CD8-positive, alpha-beta memory T cell (primary cell): ENCODE measurements at regions of chr11 and their contacts with region 1.

Region 1: DNA sequence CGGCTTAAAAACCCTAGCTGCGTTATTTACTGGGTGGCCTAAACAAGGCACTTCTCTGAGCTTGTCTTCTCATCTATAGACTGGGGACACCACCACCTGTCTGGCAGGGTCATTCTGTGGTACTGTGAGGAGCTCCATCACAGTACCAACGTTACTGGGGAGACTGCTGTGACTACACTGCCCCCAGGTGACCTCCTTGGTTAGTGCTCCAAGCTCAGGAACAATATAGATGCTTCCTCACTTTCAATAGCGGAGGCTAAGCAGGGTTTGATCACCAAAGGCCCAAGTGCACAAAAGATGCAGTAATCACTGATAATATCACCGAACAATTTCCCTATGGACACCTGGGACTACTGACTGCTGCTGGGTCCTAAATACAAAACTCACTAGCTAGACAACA is 18.8 kb downstream of the PRPF19 start:
- DNase-seq: peak in 1 of 5 donors; percentile 38
- H3K4me3 ChIP-seq: no peak overlapping the region
- H3K4me3 Mint-ChIP-seq: no peak overlapping the region
- H3K27ac ChIP-seq: no peak overlapping the region
- H3K27ac Mint-ChIP-seq: peak overlapping the region in 5 of 8 donors; percentile 7 to 74 (median 48)
- H3K4me1 ChIP-seq: no peaks in the 10 kb centered on the region
- H3K4me1 Mint-ChIP-seq: peaks cover 6 to 8% (median 8%) of the 10 kb centered on the region in 3 donors
- H3K27me3 ChIP-seq: no peaks in the 10 kb centered on the region
- H3K27me3 Mint-ChIP-seq: no peaks in the 10 kb centered on the region

Region 2: DNA sequence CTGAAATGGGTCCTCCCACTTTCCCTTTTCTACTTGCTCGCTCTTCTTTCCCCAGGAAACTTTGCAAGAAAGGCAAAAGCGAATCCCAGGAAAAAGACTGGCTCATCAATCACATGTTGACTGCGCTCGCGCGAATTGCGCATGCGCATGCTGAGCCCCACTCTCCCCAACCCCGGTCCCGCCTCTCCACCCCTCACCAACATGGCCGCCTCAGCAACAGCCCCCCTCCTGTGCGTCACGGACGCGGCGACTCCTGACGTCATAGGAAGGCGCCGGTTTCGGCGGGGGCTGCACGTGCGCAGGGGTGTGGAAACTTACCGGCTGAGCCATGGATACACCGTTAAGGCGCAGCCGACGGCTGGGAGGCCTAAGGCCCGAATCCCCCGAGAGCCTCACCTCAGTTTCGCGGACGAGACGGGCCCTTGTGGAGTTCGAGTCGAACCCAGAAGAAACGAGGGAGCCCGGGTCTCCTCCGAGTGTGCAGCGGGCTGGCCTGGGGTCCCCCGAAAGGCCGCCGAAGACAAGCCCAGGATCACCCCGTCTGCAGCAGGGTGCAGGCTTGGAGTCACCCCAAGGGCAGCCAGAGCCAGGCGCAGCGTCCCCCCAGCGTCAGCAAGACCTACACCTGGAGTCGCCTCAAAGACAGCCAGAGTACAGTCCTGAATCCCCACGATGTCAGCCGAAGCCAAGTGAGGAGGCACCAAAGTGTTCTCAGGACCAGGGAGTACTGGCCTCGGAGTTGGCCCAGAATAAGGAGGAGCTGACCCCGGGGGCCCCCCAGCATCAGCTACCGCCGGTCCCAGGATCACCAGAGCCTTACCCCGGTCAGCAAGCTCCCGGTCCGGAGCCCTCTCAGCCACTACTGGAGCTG is 45.5 kb before region 1 on chr11 and contains the start of gene CCDC86:
- CTCF ChIA-PET with region 1: interaction called, 19 read pairs
- POLR2A ChIA-PET with region 1: no interaction called
- DNase-seq: peak; percentile 96 to 99 (median 98)
- H3K4me3 ChIP-seq: peak within 1 kb of the TSS; percentile 95
- H3K4me3 Mint-ChIP-seq: peak within 1 kb of the TSS; percentile 80 to 95 (median 89)
- H3K27ac ChIP-seq: peak within 1 kb of the TSS; percentile 83
- H3K27ac Mint-ChIP-seq: peak within 1 kb of the TSS; percentile 92 to 98 (median 96)
- H3K4me1 ChIP-seq: peaks cover 37% of the 10 kb centered on the region
- H3K4me1 Mint-ChIP-seq: peaks cover 45 to 55% (median 54%) of the 10 kb centered on the region in 3 donors
- H3K27me3 ChIP-seq: no peaks in the 10 kb centered on the region
- H3K27me3 Mint-ChIP-seq: peaks cover 0 to 3% of the 10 kb centered on the region in 2 donors
- total RNA-seq, gene CCDC86: 122 to 124 TPM

Region 3: DNA sequence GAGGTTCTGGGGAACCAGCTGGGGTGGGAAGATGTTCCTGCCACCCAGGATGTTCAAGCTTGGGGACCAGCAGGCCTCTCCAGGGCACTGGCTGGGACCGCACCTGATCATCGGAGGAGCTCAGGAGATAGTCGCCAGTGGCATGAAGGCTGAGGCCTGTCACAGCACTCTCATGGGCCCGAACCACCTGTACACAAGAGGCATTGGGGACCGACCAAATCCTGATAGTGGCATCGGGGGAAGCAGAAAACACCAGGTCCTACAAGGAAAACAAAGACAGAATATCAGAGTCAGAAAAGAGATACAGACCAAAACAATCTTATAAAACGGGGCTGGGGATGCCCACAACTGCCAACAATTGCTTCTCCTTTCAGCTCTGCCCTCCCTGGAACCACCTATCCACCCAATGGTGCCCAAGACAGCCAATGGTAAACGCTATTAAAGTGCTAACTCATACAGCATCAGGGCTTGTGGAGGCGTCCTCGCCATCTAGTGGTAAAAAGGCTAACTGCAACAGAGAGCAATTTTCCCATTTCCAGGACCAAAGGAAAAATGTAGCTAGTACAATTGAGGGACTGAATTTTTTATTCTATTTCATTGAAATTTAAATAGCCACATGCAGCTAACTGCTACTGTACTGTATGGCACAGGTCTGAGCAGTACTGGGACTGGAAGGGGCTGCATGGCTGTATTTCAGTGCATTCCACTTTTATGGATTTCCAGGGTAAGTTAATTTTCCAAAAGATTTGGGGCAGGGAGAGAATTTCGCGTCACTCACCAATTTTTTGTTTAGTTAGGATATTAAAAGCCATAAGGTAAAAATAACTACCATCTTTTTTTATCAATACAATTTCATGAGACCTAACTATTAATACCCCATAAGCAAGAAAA is 11.7 kb after region 1 on chr11:
- CTCF ChIA-PET with region 1: interaction called, 32 read pairs
- POLR2A ChIA-PET with region 1: no interaction called
- DNase-seq: peak in 4 of 5 donors; percentile 10 to 56 (median 36)
- H3K4me3 ChIP-seq: no peak overlapping the region
- H3K4me3 Mint-ChIP-seq: peak overlapping the region in 1 of 7 donors; percentile 15
- H3K27ac ChIP-seq: no peak overlapping the region
- H3K27ac Mint-ChIP-seq: peak overlapping the region in 5 of 8 donors; percentile 23 to 61 (median 38)
- H3K4me1 ChIP-seq: peaks cover 8% of the 10 kb centered on the region
- H3K4me1 Mint-ChIP-seq: peaks cover 9 to 21% (median 10%) of the 10 kb centered on the region in 3 donors
- H3K27me3 ChIP-seq: no peaks in the 10 kb centered on the region
- H3K27me3 Mint-ChIP-seq: no peaks in the 10 kb centered on the region

Region 4: DNA sequence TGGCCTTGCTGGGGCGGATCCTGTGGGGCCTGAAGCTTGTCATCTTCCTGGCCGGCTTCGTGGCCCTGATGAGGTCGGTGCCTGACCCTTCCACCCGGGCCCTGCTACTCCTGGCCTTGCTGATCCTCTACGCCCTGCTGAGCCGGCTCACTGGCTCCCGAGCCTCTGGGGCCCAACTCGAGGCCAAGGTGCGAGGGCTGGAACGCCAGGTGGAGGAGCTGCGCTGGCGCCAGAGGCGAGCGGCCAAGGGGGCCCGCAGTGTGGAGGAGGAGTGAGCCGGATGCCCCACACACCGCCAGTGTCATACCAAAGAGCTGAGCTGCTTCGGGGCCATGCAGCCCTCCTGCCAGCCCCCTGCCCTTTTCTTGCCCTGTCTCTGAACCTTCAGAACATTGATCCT is 34.3 kb after region 1 on chr11:
- CTCF ChIA-PET with region 1: no interaction called
- POLR2A ChIA-PET with region 1: no interaction called
- DNase-seq: no peak
- H3K4me3 ChIP-seq: no peak overlapping the region
- H3K4me3 Mint-ChIP-seq: no peak overlapping the region
- H3K27ac ChIP-seq: no peak overlapping the region
- H3K27ac Mint-ChIP-seq: peak overlapping the region in 1 of 8 donors; percentile 15
- H3K4me1 ChIP-seq: peaks cover 13% of the 10 kb centered on the region
- H3K4me1 Mint-ChIP-seq: peaks cover 20 to 40% (median 23%) of the 10 kb centered on the region in 3 donors
- H3K27me3 ChIP-seq: peaks cover 20% of the 10 kb centered on the region
- H3K27me3 Mint-ChIP-seq: peaks cover 7 to 19% of the 10 kb centered on the region in 2 donors